ENCODE measurements at regions of chr20 and their contacts with region 1.

Region 1: DNA sequence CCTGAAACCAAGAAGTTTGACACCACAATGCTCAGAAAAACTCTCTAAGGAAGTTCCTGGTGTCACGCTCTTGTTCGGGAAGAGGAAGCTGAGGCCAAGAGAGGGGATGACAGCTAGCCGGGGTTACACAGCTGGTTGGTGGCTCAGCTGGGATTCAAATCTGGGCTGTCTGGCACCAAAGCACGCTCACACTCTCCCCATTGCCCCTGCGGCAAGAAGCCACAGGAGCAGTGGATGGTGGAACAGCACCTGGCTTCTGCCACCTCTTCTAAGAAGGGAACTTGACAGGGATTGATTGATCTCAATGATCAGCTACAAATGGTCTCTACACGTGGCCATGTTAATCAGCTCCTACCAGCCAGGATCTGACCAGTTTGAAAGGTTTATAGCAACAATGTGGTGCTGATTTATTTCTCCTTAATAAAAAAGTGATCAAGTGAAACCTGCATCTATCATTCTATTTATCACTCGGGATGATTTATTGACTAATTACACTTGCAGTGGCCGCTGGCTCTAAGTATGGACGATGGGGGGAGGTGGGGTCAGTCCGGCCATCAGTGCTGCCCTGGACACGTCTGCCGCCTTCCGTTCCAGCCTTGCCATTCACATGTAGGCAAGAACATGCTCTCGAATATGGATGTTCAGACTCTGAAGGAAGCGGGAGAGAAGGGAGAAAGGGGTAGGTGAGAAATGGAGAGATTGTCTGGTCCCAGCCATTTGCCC is 71.9 kb upstream of the TOP1 start:
- DNase-seq: peak in 1 of 2 donors; percentile 76
- H3K4me3 ChIP-seq: no peak overlapping the region
- CTCF ChIP-seq: no peak
- POLR2A ChIP-seq: no peak

Region 2: DNA sequence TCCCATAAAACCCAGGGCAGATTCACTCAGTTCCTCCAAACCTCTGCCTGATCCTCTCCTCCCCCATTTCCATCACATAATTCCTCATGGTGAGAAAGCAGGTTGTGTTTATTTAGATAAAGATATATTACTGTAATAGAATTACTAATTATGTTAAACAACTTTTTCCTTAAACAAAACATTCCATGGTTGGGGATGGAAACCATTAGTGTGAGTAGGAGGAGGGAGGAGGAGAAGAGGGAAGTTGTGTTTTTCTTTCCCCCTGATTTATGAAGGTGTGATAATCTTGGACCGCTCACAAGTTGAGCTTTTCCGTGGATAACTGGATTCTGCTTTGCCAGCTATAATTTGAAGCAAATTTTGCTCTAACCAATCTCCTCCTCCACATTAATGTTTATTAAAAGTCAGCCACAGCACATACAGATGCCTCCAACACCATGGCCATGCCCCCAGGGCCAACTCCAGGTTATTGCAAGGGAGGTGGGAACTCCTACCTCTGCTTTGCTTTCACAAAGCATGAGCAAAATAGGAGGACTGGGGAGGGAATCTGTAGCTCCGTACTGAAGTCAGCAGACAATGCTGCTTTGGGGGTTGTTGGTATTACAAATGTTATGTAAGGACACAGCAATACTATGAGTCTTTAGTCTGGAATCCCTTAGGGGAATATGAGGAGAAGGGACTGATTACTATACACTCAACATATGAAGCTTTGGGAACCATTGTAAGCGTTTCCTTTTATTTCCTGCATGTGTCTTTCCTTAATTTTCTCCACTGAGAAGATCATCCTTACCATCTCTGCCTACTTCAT is 1452.6 kb before region 1 on chr20:
- intact Hi-C with region 1: no loop called
- DNase-seq: no peak
- H3K4me3 ChIP-seq: no peak overlapping the region
- CTCF ChIP-seq: no peak
- POLR2A ChIP-seq: no peak

Region 3: DNA sequence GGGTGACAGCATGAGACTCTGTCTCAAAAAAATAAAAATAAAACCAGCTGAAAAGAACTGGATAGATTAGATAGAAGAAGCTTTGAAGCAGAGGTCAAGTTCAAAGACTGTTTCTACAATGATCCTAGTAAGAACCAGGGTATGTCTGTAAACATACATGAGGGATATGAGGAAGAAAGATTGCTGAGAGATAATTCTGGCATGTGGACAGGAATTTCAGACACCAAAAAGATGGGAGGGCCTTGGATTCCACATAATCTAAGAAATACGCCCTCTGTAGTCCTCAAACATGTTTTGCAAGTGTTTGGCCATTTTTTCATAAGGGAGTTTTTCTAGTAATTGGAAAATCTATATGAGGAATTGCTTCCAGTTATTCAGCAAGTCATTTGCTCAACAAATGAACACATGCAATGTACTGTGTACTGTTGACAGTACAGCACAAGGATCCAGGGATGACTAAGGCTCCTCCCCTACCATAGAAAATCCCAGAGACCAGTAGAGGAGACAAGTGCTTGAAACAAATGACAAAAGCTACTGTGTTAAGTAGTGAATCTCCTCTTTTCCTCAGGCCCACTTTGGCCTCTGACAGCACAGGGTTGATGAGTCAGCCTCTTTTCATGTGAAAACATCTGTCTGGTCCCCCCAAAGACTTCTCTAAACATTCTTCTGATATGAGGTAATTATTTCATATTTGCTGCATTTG is 1063.6 kb before region 1 on chr20:
- intact Hi-C with region 1: loop called (anchors 5 kb)
- DNase-seq: no peak
- H3K4me3 ChIP-seq: no peak overlapping the region
- CTCF ChIP-seq: no peak
- POLR2A ChIP-seq: no peak

Region 4: DNA sequence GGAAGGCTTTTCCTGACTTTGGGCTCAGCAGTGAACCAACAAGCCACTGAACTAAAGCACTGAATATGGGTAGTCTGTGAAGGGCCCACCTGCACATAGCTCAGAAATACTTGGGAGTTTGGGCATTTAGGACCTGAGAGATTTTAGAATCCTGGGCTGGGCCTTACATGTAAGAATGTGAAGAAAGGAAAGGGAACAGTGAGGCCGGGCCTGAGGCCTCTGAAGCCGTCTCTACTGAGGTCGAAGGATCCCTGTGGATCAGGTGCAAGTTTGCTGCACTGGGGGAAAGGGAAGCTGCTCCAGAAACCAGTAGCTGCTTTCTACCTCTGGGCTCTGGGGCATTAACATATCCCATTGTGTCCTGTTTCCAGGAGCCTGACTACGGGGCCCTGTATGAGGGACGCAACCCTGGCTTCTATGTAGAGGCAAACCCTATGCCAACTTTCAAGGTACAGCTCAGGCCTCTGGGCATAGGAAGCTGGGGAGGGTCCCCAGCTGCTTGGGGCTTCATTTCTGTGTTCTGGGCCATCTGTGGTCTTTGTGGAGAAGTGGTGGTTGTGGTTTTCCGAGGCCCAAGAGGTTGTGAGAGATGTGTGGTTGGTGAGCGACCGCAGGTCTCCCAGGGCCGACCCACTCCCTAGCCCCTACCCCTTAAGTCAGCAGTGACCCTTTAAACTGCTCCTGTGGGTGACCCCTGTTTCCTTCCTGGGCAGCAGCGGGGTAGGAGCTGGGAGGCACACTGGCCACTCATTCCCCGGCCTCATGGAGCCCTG is 211.0 kb after region 1 on chr20:
- intact Hi-C with region 1: no loop called
- DNase-seq: peak in 1 of 2 donors; percentile 74
- H3K4me3 ChIP-seq: no peak overlapping the region
- CTCF ChIP-seq: no peak
- POLR2A ChIP-seq: no peak

Measured in lower leg skin (tissue), 4 donors.